MCF 10A (cell line): ENCODE measurements at regions of chr11 and their contacts with region 1.

Region 1: GRCh38 chr11:102614485-102614884 is 10.6 kb downstream of the MMP20 start:
- DNase-seq: peak; percentile 14
- H3K4me3 Mint-ChIP-seq: no peak overlapping the region
- H3K27ac Mint-ChIP-seq: no peak overlapping the region
- H3K4me1 Mint-ChIP-seq: peaks cover 6% of the 10 kb centered on the region
- H3K27me3 Mint-ChIP-seq: no peaks in the 10 kb centered on the region
- CTCF ChIP-seq: no peak

Region 2: GRCh38 chr11:102287964-102288724 is 326.3 kb before region 1 on chr11:
- CTCF ChIA-PET with region 1: interaction called, 27 read pairs
- POLR2A ChIA-PET with region 1: interaction called, 5 read pairs
- intact Hi-C with region 1: loop called (anchors 1 kb)
- DNase-seq: peak; percentile 80
- H3K4me3 Mint-ChIP-seq: no peak overlapping the region
- H3K27ac Mint-ChIP-seq: no peak overlapping the region
- H3K4me1 Mint-ChIP-seq: peaks cover 19% of the 10 kb centered on the region
- H3K27me3 Mint-ChIP-seq: no peaks in the 10 kb centered on the region
- CTCF ChIP-seq: peak; percentile 63

Region 3: GRCh38 chr11:102346748-102347461 is 267.6 kb before region 1 on chr11 and contains the start of gene BIRC2:
- CTCF ChIA-PET with region 1: interaction called, 62 read pairs
- POLR2A ChIA-PET with region 1: interaction called, 6 read pairs
- intact Hi-C with region 1: no loop called
- DNase-seq: peak; percentile 92
- H3K4me3 Mint-ChIP-seq: peak within 1 kb of the TSS; percentile 79
- H3K27ac Mint-ChIP-seq: peak within 1 kb of the TSS; percentile 97
- H3K4me1 Mint-ChIP-seq: peaks cover 15% of the 10 kb centered on the region
- H3K27me3 Mint-ChIP-seq: no peaks in the 10 kb centered on the region
- CTCF ChIP-seq: peak; percentile 67
- total RNA-seq, gene BIRC2: 46.2 and 50.0 TPM in 2 replicates

Region 4: DNA sequence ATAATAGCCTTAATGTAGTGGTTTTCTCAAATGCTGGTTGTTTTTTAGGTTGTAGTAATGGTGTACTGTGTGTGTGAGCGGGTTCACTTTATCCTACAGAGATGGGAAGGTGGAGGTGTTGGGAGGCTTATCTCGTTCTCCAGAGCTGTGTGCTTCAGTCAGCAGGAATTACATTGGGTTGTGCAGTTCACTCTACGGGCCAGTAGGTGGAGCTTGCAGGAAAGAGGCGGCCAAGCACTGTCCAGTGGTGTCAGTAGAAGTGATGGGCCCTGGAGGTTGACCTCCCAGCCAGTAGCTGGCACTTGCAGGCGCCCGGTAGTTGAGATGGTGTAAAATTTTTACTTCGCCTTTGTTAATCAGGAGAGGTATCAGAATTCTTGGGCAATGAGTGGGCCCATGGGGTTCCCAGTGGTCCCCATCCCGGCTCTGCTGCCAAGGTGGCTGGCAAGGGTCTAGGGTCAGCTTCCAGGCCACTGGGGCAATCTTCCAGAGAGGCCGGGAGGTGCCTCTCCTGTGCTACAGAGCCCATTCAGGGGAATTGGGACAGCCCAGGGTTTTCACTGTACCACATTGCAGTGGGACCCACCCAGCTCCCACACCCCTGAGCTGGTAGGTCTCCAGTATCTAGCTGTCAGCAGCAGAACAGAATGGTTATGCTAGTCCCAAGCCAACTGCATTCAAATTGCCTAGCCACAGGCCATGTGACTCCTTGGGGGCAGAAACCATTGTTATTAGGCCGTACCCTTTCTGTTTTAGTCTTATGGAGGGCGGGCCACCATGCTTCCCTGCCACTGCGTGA is 223.6 kb before region 1 on chr11:
- CTCF ChIA-PET with region 1: interaction called, 164 read pairs
- POLR2A ChIA-PET with region 1: interaction called, 10 read pairs
- intact Hi-C with region 1: loop called (anchors 1 kb)
- DNase-seq: peak; percentile 71
- H3K4me3 Mint-ChIP-seq: no peak overlapping the region
- H3K27ac Mint-ChIP-seq: peak overlapping the region; percentile 62
- H3K4me1 Mint-ChIP-seq: peaks cover 5% of the 10 kb centered on the region
- H3K27me3 Mint-ChIP-seq: no peaks in the 10 kb centered on the region
- CTCF ChIP-seq: peak; percentile 81

Region 5: GRCh38 chr11:102527041-102527440 is 87.4 kb before region 1 on chr11:
- CTCF ChIA-PET with region 1: interaction called, 12 read pairs
- POLR2A ChIA-PET with region 1: interaction called, 3 read pairs
- intact Hi-C with region 1: no loop called
- DNase-seq: no peak
- H3K4me3 Mint-ChIP-seq: no peak overlapping the region
- H3K27ac Mint-ChIP-seq: no peak overlapping the region
- H3K4me1 Mint-ChIP-seq: peaks cover 14% of the 10 kb centered on the region
- H3K27me3 Mint-ChIP-seq: no peaks in the 10 kb centered on the region
- CTCF ChIP-seq: no peak

Region 6: DNA sequence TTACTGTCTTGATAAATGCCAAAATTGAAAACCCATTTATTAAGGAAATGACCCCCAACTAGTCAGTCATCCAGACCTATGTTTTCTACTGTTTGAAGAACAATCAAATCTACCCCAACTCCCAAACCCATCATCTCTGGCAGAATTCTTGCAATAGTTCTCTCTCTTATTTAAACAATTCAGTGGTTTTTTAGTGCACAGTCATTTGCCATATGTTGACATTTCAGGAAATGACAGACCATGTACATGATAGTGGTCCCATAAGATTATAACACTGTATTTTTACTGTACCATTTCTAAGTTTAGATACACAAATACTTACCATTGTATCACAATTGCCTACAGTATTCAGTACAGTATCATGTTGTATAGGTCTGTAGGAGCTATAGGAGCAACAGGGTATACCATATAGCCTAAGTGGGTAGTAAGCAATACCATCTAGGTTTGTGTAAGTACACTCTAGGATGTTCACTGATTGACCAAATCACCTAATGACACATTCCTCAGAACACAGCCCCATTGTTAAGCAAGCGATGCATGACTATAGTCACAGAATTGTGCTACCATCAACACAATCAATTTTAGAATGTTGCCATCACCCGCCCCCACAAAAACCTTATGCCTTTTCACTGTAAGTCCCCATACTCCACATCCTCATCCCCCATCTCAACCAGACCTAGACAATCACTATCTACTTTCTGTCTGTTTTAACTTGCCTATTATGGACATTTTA is 31.2 kb before region 1 on chr11:
- CTCF ChIA-PET with region 1: no interaction called
- POLR2A ChIA-PET with region 1: no interaction called
- intact Hi-C with region 1: no loop called
- DNase-seq: no peak
- H3K4me3 Mint-ChIP-seq: no peak overlapping the region
- H3K27ac Mint-ChIP-seq: no peak overlapping the region
- H3K4me1 Mint-ChIP-seq: peaks cover 6% of the 10 kb centered on the region
- H3K27me3 Mint-ChIP-seq: no peaks in the 10 kb centered on the region
- CTCF ChIP-seq: no peak

Region 7: GRCh38 chr11:102599642-102600261 is 14.7 kb before region 1 on chr11:
- CTCF ChIA-PET with region 1: interaction called, 66 read pairs
- POLR2A ChIA-PET with region 1: interaction called, 6 read pairs
- intact Hi-C with region 1: no loop called
- DNase-seq: peak; percentile 92
- H3K4me3 Mint-ChIP-seq: peak overlapping the region; percentile 31
- H3K27ac Mint-ChIP-seq: peak overlapping the region; percentile 88
- H3K4me1 Mint-ChIP-seq: peaks cover 37% of the 10 kb centered on the region
- H3K27me3 Mint-ChIP-seq: no peaks in the 10 kb centered on the region
- CTCF ChIP-seq: no peak

Region 8: DNA sequence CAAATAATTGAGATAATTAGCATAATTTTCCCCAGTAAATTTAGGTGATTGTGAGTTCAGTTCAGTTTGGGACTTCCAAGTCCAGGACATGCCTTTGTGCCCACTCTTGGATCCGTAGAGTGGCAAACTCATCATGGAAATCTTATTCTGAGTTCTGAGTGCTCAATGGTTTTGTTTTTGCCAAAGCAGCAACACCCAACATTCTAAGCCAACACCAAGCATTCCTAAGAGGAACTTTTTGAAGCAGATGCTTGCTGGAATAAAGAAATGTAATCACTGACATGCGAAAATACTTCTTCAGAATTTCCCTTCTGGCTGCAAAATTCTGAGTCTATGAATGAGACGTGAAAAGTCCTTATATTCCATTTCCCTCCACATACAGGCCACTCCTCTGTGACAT is 80.7 kb after region 1 on chr11:
- CTCF ChIA-PET with region 1: no interaction called
- POLR2A ChIA-PET with region 1: no interaction called
- intact Hi-C with region 1: no loop called
- DNase-seq: no peak
- H3K4me3 Mint-ChIP-seq: no peak overlapping the region
- H3K27ac Mint-ChIP-seq: no peak overlapping the region
- H3K4me1 Mint-ChIP-seq: no peaks in the 10 kb centered on the region
- H3K27me3 Mint-ChIP-seq: peaks cover 10% of the 10 kb centered on the region
- CTCF ChIP-seq: no peak